ENCODE measurements at regions of chr11 and their contacts with region 1.

Region 1: GRCh38 chr11:45846974-45847910 is at the start of gene CRY2:
- DNase-seq: peak; percentile 98 to 99
- ATAC-seq: peak; percentile 81 to 82
- H3K4me3 ChIP-seq: peak within 1 kb of the TSS; percentile 88 to 97 (median 95)
- H3K27ac ChIP-seq: peak within 1 kb of the TSS; percentile 98 to 99 (median 99)
- H3K4me1 ChIP-seq: peaks cover 54 to 56% of the 10 kb centered on the region in 2 donors
- H3K27me3 ChIP-seq: no peaks in the 10 kb centered on the region
- CTCF ChIP-seq: no peak
- POLR2A ChIP-seq: peak; percentile 99
- total RNA-seq, gene CRY2: 36.4 to 85.9 (median 37.9) TPM

Region 2: DNA sequence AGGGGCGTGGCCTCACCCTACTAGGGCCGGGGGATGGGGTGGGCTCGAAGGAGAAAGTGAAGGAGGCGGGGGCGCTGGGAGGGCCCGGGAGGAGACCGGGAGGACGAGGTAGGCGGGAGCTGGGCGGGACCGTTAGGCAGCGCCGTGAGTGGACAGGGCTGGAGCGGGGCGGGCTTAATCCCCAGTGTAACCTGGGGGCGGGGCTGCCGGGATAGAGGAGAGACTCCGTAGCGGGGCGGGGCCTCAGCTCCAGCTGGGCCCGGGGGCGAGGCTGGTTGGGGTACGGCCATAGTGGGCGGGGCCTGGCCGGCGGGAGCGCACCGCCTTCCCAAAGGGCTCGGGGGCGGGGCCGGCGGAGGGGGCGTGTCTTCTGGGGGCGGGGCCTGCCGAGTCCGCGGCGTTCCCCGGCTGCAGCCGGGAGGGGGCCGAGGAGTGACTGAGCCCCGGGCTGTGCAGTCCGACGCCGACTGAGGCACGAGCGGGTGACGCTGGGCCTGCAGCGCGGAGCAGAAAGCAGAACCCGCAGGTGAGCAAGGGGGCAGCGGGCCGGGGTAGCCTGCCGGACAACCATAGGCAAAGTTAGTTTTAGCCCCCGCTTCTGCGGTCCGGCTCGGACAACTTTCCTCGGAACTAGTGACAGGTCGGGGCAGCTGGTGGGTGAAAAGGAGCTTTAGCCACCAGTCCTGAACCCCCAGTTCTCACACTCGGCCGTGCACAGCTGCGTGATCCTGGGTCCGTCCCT is 1281.9 kb before region 1 on chr11 and contains the start of gene CD82:
- in situ Hi-C with region 1: no loop called
- intact Hi-C with region 1: loop called (anchors 5 kb)
- DNase-seq: peak; percentile 100
- ATAC-seq: peak; percentile 75 to 78
- H3K4me3 ChIP-seq: peak within 1 kb of the TSS; percentile 65 to 79 (median 72)
- H3K27ac ChIP-seq: peak within 1 kb of the TSS; percentile 98 to 99 (median 98)
- H3K4me1 ChIP-seq: peaks cover 24 to 26% of the 10 kb centered on the region in 2 donors
- H3K27me3 ChIP-seq: no peaks in the 10 kb centered on the region
- CTCF ChIP-seq: peak in 4 of 5 experiments; percentile 12 to 44 (median 24)
- POLR2A ChIP-seq: peak; percentile 47 to 58
- total RNA-seq, gene CD82: 4.5 to 17.5 (median 13.5) TPM

Region 3: DNA sequence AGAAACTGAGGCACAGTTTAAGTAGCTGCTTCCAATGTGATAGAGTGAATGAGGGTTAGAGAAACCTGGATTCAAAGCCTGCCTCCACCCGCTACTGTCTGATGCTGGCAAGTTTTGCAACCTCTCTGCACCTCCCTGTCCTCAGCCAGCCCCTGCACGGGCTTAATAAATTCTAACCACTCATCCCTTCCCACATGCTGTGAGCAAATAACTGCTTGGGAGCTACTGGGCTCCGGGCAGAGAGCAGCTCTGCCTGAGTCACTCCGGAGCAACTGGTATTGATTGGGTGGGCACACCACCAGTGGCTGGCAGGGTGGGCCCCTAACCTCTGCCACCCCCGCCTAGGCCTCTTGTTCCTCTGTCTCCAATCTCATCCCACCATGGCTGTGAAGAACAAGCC is 456.8 kb before region 1 on chr11:
- in situ Hi-C with region 1: no loop called
- intact Hi-C with region 1: no loop called
- DNase-seq: no peak
- ATAC-seq: no peak
- H3K4me3 ChIP-seq: no peak overlapping the region
- H3K27ac ChIP-seq: no peak overlapping the region
- H3K4me1 ChIP-seq: no peaks in the 10 kb centered on the region
- H3K27me3 ChIP-seq: peaks cover 0 to 5% (median 4%) of the 10 kb centered on the region in 3 donors
- CTCF ChIP-seq: no peak
- POLR2A ChIP-seq: no peak

Region 4: GRCh38 chr11:45665206-45665932 is 181.9 kb before region 1 on chr11 and contains the start of gene CHST1:
- in situ Hi-C with region 1: no loop called
- intact Hi-C with region 1: loop called (anchors 5 kb)
- DNase-seq: peak; percentile 16 to 43
- ATAC-seq: peak; percentile 54 to 55
- H3K4me3 ChIP-seq: peak within 1 kb of the TSS; percentile 61 to 87 (median 72)
- H3K27ac ChIP-seq: peak within 1 kb of the TSS; percentile 48 to 67 (median 61)
- H3K4me1 ChIP-seq: peaks cover 9 to 11% of the 10 kb centered on the region in 2 donors
- H3K27me3 ChIP-seq: peaks cover 24 to 27% (median 26%) of the 10 kb centered on the region in 3 donors
- CTCF ChIP-seq: no peak
- POLR2A ChIP-seq: peak; percentile 54 to 64
- total RNA-seq, gene CHST1: 4.5 to 5.6 (median 5.0) TPM

Region 5: GRCh38 chr11:45736424-45736823 is 110.8 kb before region 1 on chr11:
- in situ Hi-C with region 1: no loop called
- intact Hi-C with region 1: loop called (anchors 5 kb)
- DNase-seq: peak; percentile 86 to 94
- ATAC-seq: peak; percentile 76 to 78
- H3K4me3 ChIP-seq: no peak overlapping the region
- H3K27ac ChIP-seq: peak overlapping the region; percentile 85 to 93 (median 92)
- H3K4me1 ChIP-seq: peaks cover 52 to 59% of the 10 kb centered on the region in 2 donors
- H3K27me3 ChIP-seq: no peaks in the 10 kb centered on the region
- CTCF ChIP-seq: no peak
- POLR2A ChIP-seq: no peak

Region 6: DNA sequence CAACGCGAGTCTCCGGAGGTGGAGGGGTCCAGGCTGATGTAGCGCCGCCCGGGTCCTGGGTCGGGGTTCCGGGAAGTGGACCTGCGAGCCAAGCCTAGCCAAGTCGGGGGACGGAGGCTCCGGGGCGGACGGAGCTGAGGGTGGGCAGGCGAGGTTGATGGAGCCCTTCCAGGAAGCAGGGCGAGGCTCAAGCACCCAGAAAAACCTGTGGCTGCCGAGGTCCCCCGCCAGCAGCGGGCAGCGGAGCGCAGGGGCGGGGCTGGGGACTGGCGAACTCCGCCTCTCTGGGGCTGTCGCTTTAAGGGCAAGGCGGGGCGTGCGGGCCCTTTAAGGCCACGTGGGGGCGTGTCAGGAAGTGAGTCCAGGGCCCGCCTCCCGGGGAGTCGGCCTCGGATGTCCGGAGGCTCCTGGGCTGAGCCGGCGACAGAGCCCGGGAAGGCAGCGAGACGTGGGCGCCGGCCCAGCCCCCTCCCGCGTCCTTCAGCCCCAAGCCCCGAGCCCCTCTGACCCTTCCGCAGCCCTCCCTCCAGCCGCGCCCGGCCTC is 42.4 kb before region 1 on chr11 and contains the start of gene SLC35C1:
- in situ Hi-C with region 1: no loop called
- intact Hi-C with region 1: loop called (anchors 1 kb)
- DNase-seq: peak; percentile 96
- ATAC-seq: peak; percentile 87
- H3K4me3 ChIP-seq: peak within 1 kb of the TSS; percentile 76 to 96 (median 86)
- H3K27ac ChIP-seq: peak within 1 kb of the TSS; percentile 86 to 94 (median 91)
- H3K4me1 ChIP-seq: peaks cover 28 to 29% of the 10 kb centered on the region in 2 donors
- H3K27me3 ChIP-seq: no peaks in the 10 kb centered on the region
- CTCF ChIP-seq: peak in 4 of 5 experiments; percentile 25 to 48 (median 34)
- POLR2A ChIP-seq: peak; percentile 88 to 94
- total RNA-seq, gene SLC35C1: 4.8 to 11.7 (median 7.8) TPM

Region 7: DNA sequence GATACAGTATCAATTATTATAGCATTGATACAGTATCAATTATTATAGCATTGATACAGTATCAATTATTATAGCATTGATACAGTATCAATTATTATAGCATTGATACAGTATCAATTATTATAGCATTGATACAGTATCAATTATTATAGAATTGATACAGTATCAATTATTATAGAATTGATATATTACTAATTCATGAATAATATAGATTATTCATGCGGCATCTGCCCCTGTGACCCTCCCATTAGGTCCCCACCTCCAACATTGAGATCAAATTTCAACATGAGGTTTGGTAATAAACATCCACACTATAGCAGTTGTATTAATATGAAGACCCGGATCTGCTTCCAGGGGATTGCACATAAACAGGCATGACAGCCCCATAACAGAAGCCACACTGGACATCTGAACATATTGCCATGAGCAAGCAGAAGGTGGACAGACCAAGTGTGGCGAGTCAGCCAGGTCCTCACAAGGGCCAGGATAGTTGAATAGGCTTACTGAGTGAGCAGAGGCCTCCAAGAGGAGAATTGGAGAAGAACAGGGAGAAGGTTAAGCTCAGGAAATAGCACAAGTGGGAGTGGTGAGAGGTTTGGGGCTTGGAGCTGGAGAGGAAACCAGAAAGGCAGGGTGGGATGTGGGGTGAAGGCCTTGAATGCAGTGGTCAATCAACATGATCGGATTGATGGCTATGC is 31.6 kb before region 1 on chr11:
- in situ Hi-C with region 1: no loop called
- intact Hi-C with region 1: no loop called
- DNase-seq: no peak
- ATAC-seq: peak in 1 of 2 donors; percentile 21
- H3K4me3 ChIP-seq: no peak overlapping the region
- H3K27ac ChIP-seq: no peak overlapping the region
- H3K4me1 ChIP-seq: no peaks in the 10 kb centered on the region
- H3K27me3 ChIP-seq: no peaks in the 10 kb centered on the region
- CTCF ChIP-seq: no peak
- POLR2A ChIP-seq: no peak

Region 8: GRCh38 chr11:45917623-45918330 is 70.5 kb after region 1 on chr11 and contains the start of gene PEX16:
- in situ Hi-C with region 1: loop called in 2 of 4 experiments (anchors 5 to 10 kb)
- intact Hi-C with region 1: loop called (anchors 1 kb)
- DNase-seq: peak; percentile 97 to 98
- ATAC-seq: peak; percentile 92 to 94
- H3K4me3 ChIP-seq: peak within 1 kb of the TSS; percentile 88 to 97 (median 94)
- H3K27ac ChIP-seq: peak within 1 kb of the TSS; percentile 88 to 96 (median 94)
- H3K4me1 ChIP-seq: peaks cover 14 to 20% of the 10 kb centered on the region in 2 donors
- H3K27me3 ChIP-seq: peaks cover 8 to 12% (median 9%) of the 10 kb centered on the region in 3 donors
- CTCF ChIP-seq: no peak
- POLR2A ChIP-seq: peak; percentile 82
- total RNA-seq, gene PEX16: 18.5 to 27.2 (median 20.5) TPM

Region 9: DNA sequence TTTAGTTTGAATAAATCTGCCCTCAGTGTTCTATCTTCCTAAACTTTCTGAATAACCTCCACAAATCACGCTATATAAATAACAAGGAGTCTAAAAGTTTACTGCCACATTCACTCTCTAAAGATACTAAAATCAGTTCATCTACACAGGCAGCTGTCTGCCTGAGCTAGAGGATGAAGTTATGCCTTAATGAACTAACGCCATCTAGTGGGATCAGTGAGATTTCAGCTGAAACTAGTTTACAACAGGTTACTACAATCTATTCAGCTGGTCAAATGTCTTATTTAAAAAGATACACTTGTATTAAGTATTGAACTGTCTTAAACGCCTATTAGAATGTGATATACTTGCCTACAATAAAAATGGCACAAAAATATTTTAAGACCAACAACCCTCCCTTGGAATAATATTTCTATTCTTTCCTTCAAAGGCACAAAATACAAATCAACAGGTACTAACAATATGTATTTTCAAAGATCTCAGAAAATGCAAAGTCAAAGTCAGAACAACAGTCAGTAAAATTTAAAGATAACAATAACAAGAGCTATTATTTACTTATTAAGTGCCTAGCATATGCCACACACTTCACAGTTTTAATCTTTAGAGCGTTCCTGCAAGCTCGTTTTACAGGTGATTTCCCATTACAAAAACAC is 159.3 kb after region 1 on chr11:
- in situ Hi-C with region 1: no loop called
- intact Hi-C with region 1: loop called (anchors 10 kb)
- DNase-seq: no peak
- ATAC-seq: peak; percentile 70 to 92
- H3K4me3 ChIP-seq: no peak overlapping the region
- H3K27ac ChIP-seq: no peak overlapping the region
- H3K4me1 ChIP-seq: peaks cover 9 to 11% of the 10 kb centered on the region in 2 donors
- H3K27me3 ChIP-seq: no peaks in the 10 kb centered on the region
- CTCF ChIP-seq: peak; percentile 33 to 82 (median 68)
- POLR2A ChIP-seq: no peak

Measured in gastrocnemius medialis (tissue), 4 donors.